Activated B cell treated with CpG ODN at 0.5 μM for 24 hours (primary cell): ENCODE measurements at regions of chr17 and their contacts with region 1.

Region 1: GRCh38 chr17:45148183-45149036 is at the start of gene HEXIM1:
- DNase-seq: peak; percentile 97
- ATAC-seq: peak; percentile 74
- H3K4me3 Mint-ChIP-seq: peak within 1 kb of the TSS; percentile 96
- H3K27ac Mint-ChIP-seq: peak within 1 kb of the TSS; percentile 100
- H3K4me1 Mint-ChIP-seq: peaks cover 61% of the 10 kb centered on the region
- H3K27me3 Mint-ChIP-seq: no peaks in the 10 kb centered on the region
- CTCF ChIP-seq: no peak
- total RNA-seq, gene HEXIM1: 19.5 and 21.5 TPM in 2 replicates

Region 2: GRCh38 chr17:45051060-45051719 is 97.2 kb before region 1 on chr17 and contains the start of gene DCAKD:
- CTCF ChIA-PET with region 1: no interaction called
- POLR2A ChIA-PET with region 1: interaction called, 19 read pairs
- intact Hi-C with region 1: no loop called
- DNase-seq: peak; percentile 86
- ATAC-seq: peak; percentile 99
- H3K4me3 Mint-ChIP-seq: peak within 1 kb of the TSS; percentile 86
- H3K27ac Mint-ChIP-seq: peak within 1 kb of the TSS; percentile 93
- H3K4me1 Mint-ChIP-seq: peaks cover 26% of the 10 kb centered on the region
- H3K27me3 Mint-ChIP-seq: no peaks in the 10 kb centered on the region
- CTCF ChIP-seq: no peak
- total RNA-seq, gene DCAKD: 12.9 and 15.6 TPM in 2 replicates

Region 3: GRCh38 chr17:45110668-45111611 is 37.5 kb before region 1 on chr17:
- CTCF ChIA-PET with region 1: no interaction called
- POLR2A ChIA-PET with region 1: no interaction called
- intact Hi-C with region 1: no loop called
- DNase-seq: no peak
- ATAC-seq: no peak
- H3K4me3 Mint-ChIP-seq: no peak overlapping the region
- H3K27ac Mint-ChIP-seq: no peak overlapping the region
- H3K4me1 Mint-ChIP-seq: peaks cover 13% of the 10 kb centered on the region
- H3K27me3 Mint-ChIP-seq: no peaks in the 10 kb centered on the region
- CTCF ChIP-seq: no peak

Region 4: GRCh38 chr17:45172454-45173286 is 24.3 kb after region 1 on chr17:
- CTCF ChIA-PET with region 1: interaction called, 18 read pairs
- POLR2A ChIA-PET with region 1: interaction called, 71 read pairs
- intact Hi-C with region 1: no loop called
- DNase-seq: peak; percentile 52
- ATAC-seq: peak; percentile 91
- H3K4me3 Mint-ChIP-seq: peak overlapping the region; percentile 80
- H3K27ac Mint-ChIP-seq: peak overlapping the region; percentile 93
- H3K4me1 Mint-ChIP-seq: peaks cover 14% of the 10 kb centered on the region
- H3K27me3 Mint-ChIP-seq: no peaks in the 10 kb centered on the region
- CTCF ChIP-seq: no peak

Region 5: GRCh38 chr17:45228763-45229539 is 80.5 kb after region 1 on chr17:
- CTCF ChIA-PET with region 1: interaction called, 8 read pairs
- POLR2A ChIA-PET with region 1: interaction called, 64 read pairs
- intact Hi-C with region 1: loop called (anchors 1 kb)
- DNase-seq: peak; percentile 84
- ATAC-seq: peak; percentile 45
- H3K4me3 Mint-ChIP-seq: peak overlapping the region; percentile 79
- H3K27ac Mint-ChIP-seq: peak overlapping the region; percentile 99
- H3K4me1 Mint-ChIP-seq: peaks cover 97% of the 10 kb centered on the region
- H3K27me3 Mint-ChIP-seq: no peaks in the 10 kb centered on the region
- CTCF ChIP-seq: no peak